IMR-90 (cell line): ENCODE measurements at regions of chr7 and their contacts with region 1.

Region 1: DNA sequence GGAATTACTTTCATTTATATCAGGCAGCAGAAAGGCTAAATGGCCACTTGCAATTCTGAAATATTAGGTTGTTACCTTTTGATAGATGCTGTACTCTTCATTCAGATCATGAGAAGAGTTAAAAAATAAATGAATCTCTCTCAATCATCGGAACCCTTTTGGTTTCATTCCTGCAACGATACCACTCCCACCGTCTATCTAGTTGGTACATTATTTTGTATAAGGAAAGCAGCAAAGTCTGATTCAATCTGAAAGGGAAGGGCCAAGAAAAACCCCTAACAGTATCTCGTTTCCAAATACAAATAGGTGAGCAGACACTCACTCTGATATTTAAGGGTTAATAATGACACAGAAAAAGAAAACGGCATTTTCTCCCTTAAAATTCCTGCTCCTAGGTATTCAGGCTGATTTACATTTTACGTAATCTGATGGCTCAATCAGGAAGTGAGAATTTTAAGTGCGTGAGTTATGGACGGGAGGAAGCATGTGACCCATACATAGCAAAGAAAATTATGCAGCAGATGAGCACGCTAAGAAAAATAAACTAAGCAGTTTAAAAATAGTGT is 209.4 kb upstream of the KLF14 start:
- DNase-seq: peak; percentile 97
- ATAC-seq: peak; percentile 52
- H3K4me3 ChIP-seq: peak overlapping the region; percentile 45; the same call in 1 of the 2 replicates
- H3K27ac ChIP-seq: peak overlapping the region; percentile 91
- H3K4me1 ChIP-seq: peaks cover 14% of the 10 kb centered on the region
- H3K27me3 ChIP-seq: no peaks in the 10 kb centered on the region
- CTCF ChIP-seq: no peak
- POLR2A ChIP-seq: no peak
- RAD21 ChIP-seq: no peak

Region 2: DNA sequence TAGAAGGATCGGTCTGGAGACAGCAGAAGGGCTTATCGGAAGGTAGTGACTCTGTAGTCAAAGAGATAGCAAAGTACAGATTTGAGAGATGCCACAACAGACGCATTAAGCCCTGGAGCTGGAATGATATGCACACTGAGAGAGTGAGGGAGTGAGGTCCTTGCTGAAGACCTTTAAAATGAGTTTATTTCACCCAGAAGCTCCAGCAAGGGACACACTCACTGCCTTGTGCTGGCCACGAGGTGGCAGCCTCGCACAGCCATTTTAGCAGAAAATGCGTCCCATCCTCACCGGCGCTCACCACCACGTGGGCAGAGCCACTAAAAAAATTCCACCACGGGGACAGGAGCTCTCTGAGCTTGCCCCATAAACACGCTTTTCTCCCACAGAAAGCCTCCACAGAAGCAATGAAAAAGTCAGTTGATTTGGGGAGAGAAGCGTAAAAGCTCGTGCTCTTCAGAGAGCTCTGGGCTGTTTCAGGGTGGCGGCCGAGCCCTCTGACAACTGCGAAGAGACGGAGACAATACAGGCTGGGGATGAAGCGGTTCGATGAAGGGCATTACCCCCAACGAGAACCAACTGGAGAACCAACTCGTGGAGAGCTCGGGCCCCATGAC is 46.4 kb before region 1 on chr7:
- CTCF ChIA-PET with region 1: interaction called, 10 read pairs
- POLR2A ChIA-PET with region 1: no interaction called
- dilution Hi-C with region 1: no loop called
- in situ Hi-C with region 1: no loop called
- intact Hi-C with region 1: no loop called
- DNase-seq: peak; percentile 84
- ATAC-seq: peak; percentile 24
- H3K4me3 ChIP-seq: no peak overlapping the region
- H3K27ac ChIP-seq: peak overlapping the region; percentile 71
- H3K4me1 ChIP-seq: peaks cover 52% of the 10 kb centered on the region
- H3K27me3 ChIP-seq: no peaks in the 10 kb centered on the region
- CTCF ChIP-seq: peak; percentile 80
- POLR2A ChIP-seq: no peak
- RAD21 ChIP-seq: peak; percentile 83

Region 3: GRCh38 chr7:130961128-130961601 is 17.7 kb after region 1 on chr7:
- CTCF ChIA-PET with region 1: interaction called, 5 read pairs
- POLR2A ChIA-PET with region 1: no interaction called
- dilution Hi-C with region 1: no loop called
- in situ Hi-C with region 1: no loop called
- intact Hi-C with region 1: loop called (anchors 1 kb)
- DNase-seq: peak; percentile 77
- ATAC-seq: peak; percentile 8
- H3K4me3 ChIP-seq: peak overlapping the region; percentile 30; the same call in 1 of the 2 replicates
- H3K27ac ChIP-seq: peak overlapping the region; percentile 91
- H3K4me1 ChIP-seq: peaks cover 25% of the 10 kb centered on the region
- H3K27me3 ChIP-seq: no peaks in the 10 kb centered on the region
- CTCF ChIP-seq: no peak
- POLR2A ChIP-seq: no peak
- RAD21 ChIP-seq: no peak

Region 4: DNA sequence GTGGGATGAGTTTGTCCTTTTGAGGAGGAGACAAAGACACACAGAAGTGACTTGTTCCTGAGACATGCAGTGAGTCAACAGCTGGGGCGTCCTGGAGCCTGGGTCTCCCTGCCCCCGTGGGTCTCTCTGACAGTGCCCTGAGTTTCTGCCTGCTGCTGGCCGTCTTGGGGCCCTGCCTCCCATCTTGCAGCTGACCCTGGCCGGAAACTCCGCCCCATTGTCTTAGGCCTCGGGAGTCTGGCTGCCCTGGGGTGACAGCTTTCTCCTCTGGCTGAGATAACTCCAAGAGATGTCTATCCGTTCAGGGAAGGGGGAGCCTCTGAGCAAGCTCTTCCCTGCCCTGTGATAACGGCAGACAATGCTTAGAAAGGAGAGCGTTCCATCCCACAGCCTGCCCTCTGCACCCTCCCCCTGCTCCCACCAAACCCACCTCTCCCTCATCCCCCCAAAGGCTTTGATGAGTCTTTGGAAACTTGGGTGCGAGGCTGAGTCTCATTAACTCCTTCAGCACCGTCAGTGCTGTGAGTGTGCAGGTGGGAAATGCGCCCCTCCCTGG is 682.5 kb after region 1 on chr7:
- CTCF ChIA-PET with region 1: no interaction called
- POLR2A ChIA-PET with region 1: no interaction called
- dilution Hi-C with region 1: no loop called
- in situ Hi-C with region 1: no loop called
- intact Hi-C with region 1: no loop called
- DNase-seq: peak; percentile 91
- ATAC-seq: peak; percentile 92
- H3K4me3 ChIP-seq: no peak overlapping the region
- H3K27ac ChIP-seq: peak overlapping the region; percentile 62
- H3K4me1 ChIP-seq: peaks cover 27% of the 10 kb centered on the region
- H3K27me3 ChIP-seq: no peaks in the 10 kb centered on the region
- CTCF ChIP-seq: 0 out of 2 replicates have a peak, but pooled peaks have one; percentile 19
- POLR2A ChIP-seq: no peak
- RAD21 ChIP-seq: peak; percentile 14; the same call in 1 of the 2 replicates